ENCODE measurements at regions of chr10 and their contacts with region 1.

Region 1: DNA sequence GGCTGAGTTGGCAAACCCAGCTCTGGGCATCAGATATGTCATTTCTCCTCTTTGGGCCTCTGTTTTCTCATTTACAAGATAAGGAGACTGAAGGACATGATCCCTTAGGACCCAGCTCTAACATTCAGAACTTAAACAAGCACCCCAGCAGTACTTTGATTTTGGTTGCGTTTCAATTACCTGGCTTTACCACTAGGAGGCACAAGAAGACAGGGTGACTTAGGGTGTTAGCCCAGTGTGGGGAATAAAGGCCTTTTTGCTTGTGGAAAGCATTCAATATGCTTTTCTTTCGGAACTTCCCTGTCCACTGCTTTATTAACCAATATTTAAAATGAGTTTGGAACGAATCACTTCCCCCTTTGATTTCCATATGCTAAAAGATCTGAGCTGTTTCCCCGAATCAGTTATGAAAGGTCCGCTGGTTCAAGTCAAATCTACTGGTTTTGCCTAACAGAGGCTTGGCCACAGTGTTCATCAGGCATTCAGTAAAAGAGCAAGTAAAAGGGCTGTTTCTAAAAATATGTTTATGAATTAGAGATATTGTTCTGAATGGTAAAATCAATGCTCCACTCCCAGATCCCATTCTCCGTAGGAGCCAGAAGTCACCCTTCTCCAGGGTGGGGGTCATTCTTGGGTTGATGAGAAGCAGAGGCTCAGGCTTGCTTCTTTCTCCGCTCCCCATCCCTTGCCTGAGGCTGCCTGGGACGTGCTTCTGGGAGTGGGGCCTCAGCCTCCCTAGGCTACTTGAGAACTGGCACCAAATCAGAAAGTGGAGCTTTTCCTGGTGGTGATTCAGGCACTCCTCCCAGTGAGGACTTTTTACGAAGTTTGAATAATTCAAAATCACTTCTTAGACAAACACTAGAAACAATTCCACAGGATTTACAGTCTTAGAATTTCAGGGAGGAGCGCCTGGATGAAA is 105.5 kb downstream of the MYOF start:
- DNase-seq: peak; percentile 93
- H3K4me3 ChIP-seq: peak overlapping the region; percentile 15 to 34 (median 20)
- H3K27ac ChIP-seq: peak overlapping the region; percentile 85 to 89 (median 87)
- H3K4me1 ChIP-seq: peaks cover 9 to 43% (median 29%) of the 10 kb centered on the region in 4 donors
- H3K27me3 ChIP-seq: no peaks in the 10 kb centered on the region
- CTCF ChIP-seq: peak; percentile 94 to 98 (median 94)
- EP300 ChIP-seq: no peak
- POLR2A ChIP-seq: no peak

Region 2: DNA sequence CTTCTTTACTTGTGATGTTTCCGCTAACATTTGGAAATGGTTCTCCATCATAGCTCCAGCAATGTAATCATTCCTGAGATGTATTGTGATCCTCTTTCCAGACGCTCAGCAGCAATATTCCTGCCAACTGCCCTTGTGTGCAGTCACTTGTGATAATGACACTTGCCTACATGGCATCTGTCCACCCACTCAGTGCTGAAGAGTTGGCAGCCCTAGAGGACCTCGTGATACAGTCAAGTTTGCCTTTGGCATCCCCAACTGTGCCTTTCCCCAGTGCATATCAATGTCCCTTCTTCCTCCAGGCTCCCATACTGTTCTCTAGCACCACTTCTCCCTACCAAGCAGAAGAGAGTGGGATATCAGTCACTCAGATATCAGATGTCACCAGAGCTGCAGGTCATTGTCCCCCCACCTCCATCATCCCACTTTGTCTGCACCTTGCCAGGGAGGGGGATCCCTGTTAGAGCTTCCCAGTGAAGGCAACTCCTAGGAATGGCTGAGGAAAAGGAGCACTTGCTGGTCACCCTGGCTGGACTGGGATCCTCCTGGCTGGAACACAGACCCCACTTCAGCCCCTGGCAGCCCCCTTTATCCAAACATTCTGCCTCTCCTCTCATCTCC is 40.7 kb after region 1 on chr10:
- intact Hi-C with region 1: loop called (anchors 5 kb)
- DNase-seq: no peak
- H3K4me3 ChIP-seq: no peak overlapping the region
- H3K27ac ChIP-seq: peak overlapping the region in 1 of 4 donors; percentile 1
- H3K4me1 ChIP-seq: peaks cover 51 to 69% (median 61%) of the 10 kb centered on the region in 4 donors
- H3K27me3 ChIP-seq: no peaks in the 10 kb centered on the region
- CTCF ChIP-seq: no peak
- EP300 ChIP-seq: no peak
- POLR2A ChIP-seq: no peak

Region 3: DNA sequence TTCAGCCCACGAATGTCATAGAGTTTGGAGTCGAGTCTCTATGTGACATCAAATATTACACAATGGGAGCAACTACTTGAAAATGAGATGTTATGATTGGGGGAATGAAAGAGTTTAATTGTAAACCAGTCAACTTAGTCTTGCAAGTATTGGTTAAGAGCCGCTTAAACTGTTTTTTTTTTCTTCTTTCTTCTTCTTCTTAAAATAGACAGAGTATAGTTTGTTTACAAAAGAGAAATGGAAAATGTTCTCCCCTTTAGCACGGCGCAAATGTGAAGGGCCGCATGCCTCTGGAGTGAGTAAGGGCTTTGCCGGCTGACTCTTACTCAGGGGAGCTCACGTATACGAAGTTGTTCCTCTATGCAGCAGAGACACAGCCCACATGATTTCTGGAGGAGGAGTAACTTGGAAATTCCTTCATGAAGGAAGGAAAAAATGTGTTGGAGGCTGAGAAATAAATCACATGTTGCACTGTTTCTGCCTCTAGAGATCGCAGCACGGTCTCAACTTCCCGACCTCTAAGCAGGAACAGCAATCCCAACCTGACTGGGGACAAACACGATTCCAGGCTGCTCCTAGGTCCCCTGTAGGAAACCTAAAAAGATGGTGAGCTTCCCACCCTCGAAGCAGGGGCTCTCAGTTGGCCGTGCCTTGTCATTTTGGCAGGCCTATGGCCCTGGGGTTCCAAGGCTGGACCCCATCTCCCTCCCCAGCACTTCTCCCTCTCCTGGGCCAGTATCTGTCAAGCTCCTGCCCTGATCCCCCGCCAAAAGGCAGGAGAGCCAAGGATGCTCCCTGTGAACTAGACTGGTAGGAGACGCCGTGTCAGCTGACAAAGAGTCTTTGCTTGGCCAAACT is 60.7 kb after region 1 on chr10:
- intact Hi-C with region 1: loop called (anchors 5 kb)
- DNase-seq: peak; percentile 97
- H3K4me3 ChIP-seq: peak overlapping the region; percentile 34 to 44 (median 39)
- H3K27ac ChIP-seq: peak overlapping the region; percentile 99 to 100 (median 99)
- H3K4me1 ChIP-seq: peaks cover 59 to 98% (median 96%) of the 10 kb centered on the region in 4 donors
- H3K27me3 ChIP-seq: no peaks in the 10 kb centered on the region
- CTCF ChIP-seq: no peak
- EP300 ChIP-seq: peak; percentile 92
- POLR2A ChIP-seq: peak; percentile 23

Region 4: GRCh38 chr10:93482145-93482834 is 105.7 kb after region 1 on chr10 and contains the start of gene MYOF:
- intact Hi-C with region 1: loop called (anchors 1 kb)
- DNase-seq: peak; percentile 92
- H3K4me3 ChIP-seq: peak within 1 kb of the TSS; percentile 62 to 71 (median 64)
- H3K27ac ChIP-seq: peak within 1 kb of the TSS; percentile 86 to 93 (median 89)
- H3K4me1 ChIP-seq: peaks cover 10 to 53% (median 48%) of the 10 kb centered on the region in 4 donors
- H3K27me3 ChIP-seq: no peaks in the 10 kb centered on the region
- CTCF ChIP-seq: peak; percentile 57 to 61 (median 58)
- EP300 ChIP-seq: no peak
- POLR2A ChIP-seq: peak; percentile 63
- total RNA-seq, gene MYOF: 71.2 to 120 (median 97.3) TPM

Measured in esophagus muscularis mucosa (tissue), 4 donors.